ENCODE measurements at regions of chr7 and their contacts with region 1.

Region 1: DNA sequence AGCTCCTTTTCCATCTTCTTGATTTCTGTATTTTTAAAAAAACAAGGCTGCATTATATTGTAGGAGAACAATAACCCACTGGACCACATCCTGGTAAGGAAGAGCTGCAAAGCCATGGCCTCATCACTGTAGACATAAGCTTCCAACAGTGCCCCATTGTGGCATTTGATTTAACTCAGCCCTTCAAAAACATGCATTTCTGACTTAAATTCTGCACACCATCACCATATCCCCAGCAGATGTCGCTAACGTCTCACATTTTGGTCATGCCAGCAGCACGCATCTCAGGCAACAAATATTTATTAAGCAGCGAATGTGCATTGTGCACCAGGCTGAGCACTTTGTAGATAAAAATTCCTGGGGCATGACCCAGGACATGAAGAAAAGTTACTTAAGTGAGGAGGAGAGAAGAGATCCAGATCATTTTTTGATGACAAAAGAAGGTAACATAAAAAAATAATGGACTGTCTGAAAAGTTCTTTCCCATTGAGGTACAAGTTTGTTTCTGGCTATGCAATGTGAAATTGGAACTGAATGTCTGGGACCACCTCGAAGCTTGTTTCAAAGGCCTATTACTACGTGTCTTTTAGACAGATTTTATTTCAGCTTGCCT is 164.6 kb upstream of the CDCA7L start:
- DNase-seq: peak; percentile 42 to 71 (median 60)
- H3K4me3 ChIP-seq: no peak overlapping the region
- H3K27ac ChIP-seq: no peak overlapping the region
- H3K4me1 ChIP-seq: no peaks in the 10 kb centered on the region
- H3K27me3 ChIP-seq: no peaks in the 10 kb centered on the region
- CTCF ChIP-seq: peak; percentile 35 to 81 (median 71)
- EP300 ChIP-seq: no peak
- POLR2A ChIP-seq: no peak

Region 2: GRCh38 chr7:22255834-22256233 is 145.5 kb after region 1 on chr7:
- intact Hi-C with region 1: loop called in 2 of 4 experiments (anchors 2 to 5 kb)
- DNase-seq: no peak
- H3K4me3 ChIP-seq: no peak overlapping the region
- H3K27ac ChIP-seq: no peak overlapping the region
- H3K4me1 ChIP-seq: no peaks in the 10 kb centered on the region
- H3K27me3 ChIP-seq: no peaks in the 10 kb centered on the region
- CTCF ChIP-seq: no peak
- EP300 ChIP-seq: no peak
- POLR2A ChIP-seq: no peak

Region 3: DNA sequence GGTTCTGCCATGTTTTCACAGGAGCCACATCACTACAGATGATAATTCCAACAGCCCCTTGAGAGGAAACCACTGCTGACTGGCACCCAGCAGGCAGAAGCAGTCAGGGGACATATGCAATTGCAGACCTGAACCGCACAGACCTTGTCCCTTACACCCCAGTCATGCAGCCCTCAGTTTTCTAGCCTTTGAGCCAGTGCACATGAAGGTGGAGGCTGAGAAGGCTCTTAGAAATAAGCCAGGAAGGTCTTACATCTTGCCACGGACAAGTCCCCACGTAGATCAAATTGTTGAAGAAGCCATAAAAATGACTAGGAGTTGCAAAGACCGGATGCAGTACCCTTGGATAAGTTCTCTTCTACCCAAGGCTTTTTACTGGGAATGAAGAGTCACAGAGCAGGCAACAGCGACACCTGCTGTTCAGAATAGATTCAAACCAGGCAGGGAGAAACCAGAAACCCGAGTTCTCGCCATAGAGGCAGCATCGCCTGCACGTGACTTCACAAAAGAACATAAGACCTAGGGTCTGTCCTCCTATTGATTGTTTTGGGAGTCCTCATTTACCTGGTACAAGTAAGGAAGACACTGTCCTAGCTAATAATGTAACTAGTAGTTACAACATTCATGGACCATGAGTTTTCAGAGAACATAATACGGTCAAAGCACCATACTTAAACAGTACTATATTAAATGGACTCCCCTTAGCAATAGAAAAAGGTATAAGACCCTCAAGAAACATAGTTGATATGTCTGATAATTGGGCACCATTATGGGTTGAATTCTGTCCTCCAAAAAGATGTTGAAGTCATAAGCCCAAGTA is 378.5 kb after region 1 on chr7:
- intact Hi-C with region 1: loop called (anchors 2 to 5 kb)
- DNase-seq: peak; percentile 22 to 65 (median 57)
- H3K4me3 ChIP-seq: no peak overlapping the region
- H3K27ac ChIP-seq: no peak overlapping the region
- H3K4me1 ChIP-seq: no peaks in the 10 kb centered on the region
- H3K27me3 ChIP-seq: no peaks in the 10 kb centered on the region
- CTCF ChIP-seq: peak; percentile 63 to 72 (median 64)
- EP300 ChIP-seq: no peak
- POLR2A ChIP-seq: no peak

Measured in ovary (tissue), 10 donors.